ENCODE measurements at regions of chr22 and their contacts with region 1.

Region 1: GRCh38 chr22:30920407-30920806 is 48.2 kb downstream of the MORC2 start:
- DNase-seq: peak; percentile 72
- ATAC-seq: peak; percentile 71
- H3K4me3 Mint-ChIP-seq: peak overlapping the region; percentile 58
- H3K27ac Mint-ChIP-seq: no peak overlapping the region
- H3K4me1 Mint-ChIP-seq: peaks cover 10% of the 10 kb centered on the region
- H3K27me3 Mint-ChIP-seq: no peaks in the 10 kb centered on the region
- CTCF ChIP-seq: peak; percentile 97

Region 2: GRCh38 chr22:30396871-30397655 is 523.3 kb before region 1 on chr22 and contains the start of gene SEC14L2:
- CTCF ChIA-PET with region 1: no interaction called
- POLR2A ChIA-PET with region 1: interaction called, 10 read pairs
- intact Hi-C with region 1: no loop called
- DNase-seq: peak; percentile 27
- ATAC-seq: peak; percentile 60
- H3K4me3 Mint-ChIP-seq: peak within 1 kb of the TSS; percentile 79
- H3K27ac Mint-ChIP-seq: no peak within 1 kb of the TSS
- H3K4me1 Mint-ChIP-seq: peaks cover 19% of the 10 kb centered on the region
- H3K27me3 Mint-ChIP-seq: peaks cover 34% of the 10 kb centered on the region
- CTCF ChIP-seq: no peak
- total RNA-seq, gene SEC14L2: 0.40 and 0.42 TPM in 2 replicates

Region 3: GRCh38 chr22:30615543-30615954 is 304.9 kb before region 1 on chr22:
- CTCF ChIA-PET with region 1: no interaction called
- POLR2A ChIA-PET with region 1: no interaction called
- intact Hi-C with region 1: no loop called
- DNase-seq: no peak
- ATAC-seq: no peak
- H3K4me3 Mint-ChIP-seq: no peak overlapping the region
- H3K27ac Mint-ChIP-seq: no peak overlapping the region
- H3K4me1 Mint-ChIP-seq: no peaks in the 10 kb centered on the region
- H3K27me3 Mint-ChIP-seq: peaks cover 12% of the 10 kb centered on the region
- CTCF ChIP-seq: no peak

Region 4: DNA sequence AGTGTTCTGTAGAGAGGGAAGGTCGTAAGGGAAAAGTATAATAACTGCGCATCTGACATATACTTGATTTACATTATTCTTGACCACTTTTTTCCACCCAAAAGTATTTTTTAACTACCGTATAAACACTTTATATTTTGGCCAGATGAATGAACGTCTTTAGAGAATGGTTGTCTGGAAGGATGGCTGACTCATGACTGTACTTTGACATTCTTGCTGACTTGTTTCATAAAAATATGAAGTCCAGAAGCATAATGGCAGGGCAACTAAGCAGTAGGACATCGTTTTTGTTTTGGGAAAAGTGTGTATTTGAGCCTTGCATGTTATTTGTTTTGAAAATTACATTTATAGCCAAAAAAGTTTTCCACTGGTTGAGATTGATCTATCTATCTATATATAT is 115.8 kb before region 1 on chr22:
- CTCF ChIA-PET with region 1: no interaction called
- POLR2A ChIA-PET with region 1: no interaction called
- intact Hi-C with region 1: no loop called
- DNase-seq: no peak
- ATAC-seq: no peak
- H3K4me3 Mint-ChIP-seq: no peak overlapping the region
- H3K27ac Mint-ChIP-seq: no peak overlapping the region
- H3K4me1 Mint-ChIP-seq: no peaks in the 10 kb centered on the region
- H3K27me3 Mint-ChIP-seq: peaks cover 51% of the 10 kb centered on the region
- CTCF ChIP-seq: no peak

Region 5: GRCh38 chr22:30902496-30903357 is 17.7 kb before region 1 on chr22:
- CTCF ChIA-PET with region 1: interaction called, 6 read pairs
- POLR2A ChIA-PET with region 1: interaction called, 10 read pairs
- intact Hi-C with region 1: no loop called
- DNase-seq: no peak
- ATAC-seq: peak; percentile 47
- H3K4me3 Mint-ChIP-seq: peak overlapping the region; percentile 74
- H3K27ac Mint-ChIP-seq: peak overlapping the region; percentile 76
- H3K4me1 Mint-ChIP-seq: peaks cover 10% of the 10 kb centered on the region
- H3K27me3 Mint-ChIP-seq: no peaks in the 10 kb centered on the region
- CTCF ChIP-seq: no peak

Region 6: DNA sequence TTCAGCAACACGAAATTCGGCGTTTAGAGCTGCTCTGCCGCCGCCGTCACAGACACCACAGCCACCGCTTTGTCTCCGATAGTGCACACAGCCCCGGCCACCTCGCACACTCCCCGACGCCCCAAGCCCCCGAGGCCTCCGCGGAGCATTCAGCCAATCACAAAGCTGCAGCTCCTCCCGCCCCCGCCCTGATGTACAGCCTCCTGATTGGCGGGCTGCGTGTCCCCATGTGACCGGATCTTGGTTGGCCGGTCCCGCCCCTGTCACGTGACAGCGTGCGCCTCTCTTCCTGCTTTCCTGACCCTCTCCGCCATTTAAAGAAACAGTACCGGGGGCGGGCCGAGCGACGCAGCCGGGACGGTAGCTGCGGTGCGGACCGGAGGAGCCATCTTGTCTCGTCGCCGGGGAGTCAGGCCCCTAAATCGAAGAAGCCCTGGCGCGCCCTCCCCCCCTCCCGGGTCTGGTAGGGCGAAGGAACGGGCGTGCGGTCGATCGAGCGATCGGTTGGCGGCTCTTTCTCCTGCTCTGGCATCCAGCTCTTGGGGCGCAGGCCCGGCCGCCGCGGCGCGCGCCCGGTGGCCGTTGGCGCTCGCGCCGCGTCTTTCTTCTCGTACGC is 48.6 kb after region 1 on chr22 and contains the start of gene TUG1:
- CTCF ChIA-PET with region 1: no interaction called
- POLR2A ChIA-PET with region 1: interaction called, 34 read pairs
- intact Hi-C with region 1: loop called (anchors 1 kb)
- DNase-seq: peak; percentile 93
- ATAC-seq: peak; percentile 92
- H3K4me3 Mint-ChIP-seq: peak within 1 kb of the TSS; percentile 95
- H3K27ac Mint-ChIP-seq: peak within 1 kb of the TSS; percentile 94
- H3K4me1 Mint-ChIP-seq: peaks cover 56% of the 10 kb centered on the region
- H3K27me3 Mint-ChIP-seq: no peaks in the 10 kb centered on the region
- CTCF ChIP-seq: no peak
- total RNA-seq, gene TUG1: 70.4 and 83.0 TPM in 2 replicates

Region 7: DNA sequence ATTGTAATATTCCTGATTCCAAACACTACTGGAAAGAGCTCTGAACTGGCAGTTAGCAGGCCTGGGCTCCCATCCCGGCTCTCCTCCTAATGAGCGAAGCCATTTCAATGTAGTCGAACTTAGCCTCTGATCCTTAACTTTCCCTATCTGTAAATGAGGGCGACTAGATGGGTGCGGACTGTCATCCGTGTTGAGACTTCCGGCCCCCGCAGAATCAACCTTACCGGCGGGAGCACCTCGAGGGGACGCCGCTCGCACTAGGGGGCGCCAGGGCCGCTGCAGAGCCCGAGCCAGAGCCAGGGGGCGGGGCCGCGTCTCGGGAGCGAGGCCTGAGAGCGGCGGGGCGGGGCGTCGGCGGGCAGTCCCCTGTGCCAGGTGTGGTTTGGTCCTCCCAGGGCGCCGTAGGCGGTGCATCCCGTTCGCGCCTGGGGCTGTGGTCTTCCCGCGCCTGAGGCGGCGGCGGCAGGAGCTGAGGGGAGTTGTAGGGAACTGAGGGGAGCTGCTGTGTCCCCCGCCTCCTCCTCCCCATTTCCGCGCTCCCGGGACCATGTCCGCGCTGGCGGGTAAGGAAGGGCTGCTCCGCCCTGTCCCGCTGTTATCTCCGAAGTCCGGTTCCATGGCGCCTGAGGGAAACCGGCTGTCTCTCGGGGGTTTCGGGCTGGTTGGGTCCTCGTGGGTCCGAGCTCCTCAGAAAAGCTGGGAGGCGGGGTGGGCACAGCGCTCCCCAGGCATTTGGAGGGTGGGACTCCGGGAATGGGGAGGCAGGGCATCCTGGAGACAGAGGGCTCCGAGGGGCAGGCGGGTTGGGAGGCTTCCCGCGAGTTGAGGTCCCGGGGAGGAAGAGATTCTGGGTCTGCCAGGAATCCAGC is 291.7 kb after region 1 on chr22 and contains the start of gene LIMK2:
- CTCF ChIA-PET with region 1: no interaction called
- POLR2A ChIA-PET with region 1: no interaction called
- intact Hi-C with region 1: no loop called
- DNase-seq: peak; percentile 98
- ATAC-seq: peak; percentile 100
- H3K4me3 Mint-ChIP-seq: peak within 1 kb of the TSS; percentile 90
- H3K27ac Mint-ChIP-seq: peak within 1 kb of the TSS; percentile 79
- H3K4me1 Mint-ChIP-seq: peaks cover 26% of the 10 kb centered on the region
- H3K27me3 Mint-ChIP-seq: no peaks in the 10 kb centered on the region
- CTCF ChIP-seq: peak; percentile 30
- total RNA-seq, gene LIMK2: 15.3 and 17.7 TPM in 2 replicates

Region 8: DNA sequence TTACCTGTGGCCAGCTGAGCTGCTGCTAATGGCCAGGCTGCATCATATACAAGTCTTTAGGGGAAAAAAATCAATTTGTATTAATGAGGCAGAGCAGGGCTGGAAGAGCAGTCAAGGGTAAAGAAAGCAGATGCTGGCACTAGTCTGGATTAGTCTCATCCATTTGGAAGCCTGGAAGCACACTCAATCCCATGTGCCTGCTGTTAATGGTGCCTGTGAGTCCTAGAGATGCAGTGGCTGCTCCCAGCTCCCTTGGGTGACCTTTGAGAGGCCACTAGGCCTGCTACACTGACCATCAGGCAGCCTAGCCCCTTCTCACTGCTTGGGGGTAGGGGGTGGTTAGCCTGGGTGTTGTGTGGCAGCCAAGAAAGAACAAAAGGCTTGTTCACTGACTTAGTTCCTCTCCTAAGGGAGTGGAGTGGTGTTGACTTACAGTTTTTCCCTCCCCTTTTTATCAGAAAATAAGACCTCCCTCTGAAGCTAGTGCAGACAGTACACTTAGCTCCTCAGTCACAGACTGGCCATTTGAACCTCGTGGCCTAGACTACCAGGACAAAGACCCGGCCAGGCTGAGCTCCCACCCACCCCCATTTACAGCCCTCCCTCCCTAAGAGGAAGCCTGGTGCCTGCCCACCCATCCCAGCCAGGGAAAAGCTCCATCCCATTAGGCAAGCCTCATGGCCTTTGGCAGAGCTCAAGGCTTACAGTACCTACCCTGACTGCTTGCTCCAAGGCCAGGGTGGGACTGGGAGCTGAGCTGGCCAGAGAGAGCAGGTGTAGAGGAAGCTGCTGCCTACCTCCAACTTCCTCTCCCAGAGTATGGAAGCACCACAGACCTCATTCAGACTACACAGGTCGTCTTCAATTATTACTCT is 364.1 kb after region 1 on chr22:
- CTCF ChIA-PET with region 1: no interaction called
- POLR2A ChIA-PET with region 1: no interaction called
- intact Hi-C with region 1: no loop called
- DNase-seq: no peak
- ATAC-seq: no peak
- H3K4me3 Mint-ChIP-seq: no peak overlapping the region
- H3K27ac Mint-ChIP-seq: peak overlapping the region; percentile 100
- H3K4me1 Mint-ChIP-seq: peaks cover 52% of the 10 kb centered on the region
- H3K27me3 Mint-ChIP-seq: no peaks in the 10 kb centered on the region
- CTCF ChIP-seq: no peak